Aorta (tissue), 5 donors: ENCODE measurements at regions of chr9 and their contacts with region 1.

Region 1: DNA sequence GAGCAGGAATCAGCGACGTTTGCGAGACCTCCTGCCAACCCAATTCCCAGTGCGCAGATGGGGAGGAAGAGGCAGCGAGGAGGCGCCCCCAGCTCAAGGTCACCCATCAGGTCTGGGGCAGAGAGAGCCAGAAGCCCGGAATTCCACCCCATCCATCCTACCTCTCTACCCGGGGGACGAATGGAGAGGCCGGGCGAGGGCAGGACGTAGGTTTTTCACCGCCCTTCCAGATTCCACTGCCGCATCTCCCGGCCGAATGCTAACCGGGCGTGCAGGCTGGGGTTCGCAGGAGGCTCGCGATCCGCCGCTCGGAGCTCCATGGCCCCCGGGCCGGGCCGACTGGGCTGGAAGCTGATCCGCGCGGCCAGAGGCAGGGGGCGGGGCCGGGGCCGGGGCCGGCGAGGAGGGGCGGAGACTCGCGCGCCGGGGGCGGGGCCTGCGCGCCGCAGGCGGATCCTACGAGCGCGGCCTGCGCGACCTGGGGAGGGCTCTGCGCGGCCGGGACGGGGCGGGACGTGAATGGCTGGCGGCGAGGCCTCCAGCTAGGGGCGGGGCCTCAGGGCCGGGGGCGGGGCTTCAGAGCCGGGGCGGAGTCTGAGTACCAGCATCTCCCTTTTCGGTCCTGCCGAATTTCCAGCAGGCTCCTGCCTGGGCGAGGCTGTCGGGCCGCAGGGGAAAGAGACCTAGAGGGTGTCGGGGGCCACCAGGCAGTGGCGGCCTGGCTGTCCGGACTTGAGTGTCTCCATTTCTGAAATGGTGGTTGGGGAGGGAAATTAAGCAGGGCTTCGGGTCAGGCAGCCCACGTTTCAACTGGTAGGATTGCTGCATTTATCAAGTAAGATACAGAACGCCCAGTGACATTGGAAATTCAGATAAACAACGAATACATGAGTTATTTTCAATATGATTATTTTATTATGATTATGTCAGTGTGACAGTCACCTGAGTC is at the start of gene ST6GALNAC4:
- DNase-seq: peak; percentile 96 to 98
- ATAC-seq: peak; percentile 93
- H3K4me3 ChIP-seq: peak within 1 kb of the TSS; percentile 44 to 72
- H3K27ac ChIP-seq: peak within 1 kb of the TSS in 1 of 2 donors; percentile 26
- H3K4me1 ChIP-seq: no peaks in the 10 kb centered on the region
- H3K27me3 ChIP-seq: no peaks in the 10 kb centered on the region
- total RNA-seq, gene ST6GALNAC4: 34.9 to 46.5 TPM

Region 2: DNA sequence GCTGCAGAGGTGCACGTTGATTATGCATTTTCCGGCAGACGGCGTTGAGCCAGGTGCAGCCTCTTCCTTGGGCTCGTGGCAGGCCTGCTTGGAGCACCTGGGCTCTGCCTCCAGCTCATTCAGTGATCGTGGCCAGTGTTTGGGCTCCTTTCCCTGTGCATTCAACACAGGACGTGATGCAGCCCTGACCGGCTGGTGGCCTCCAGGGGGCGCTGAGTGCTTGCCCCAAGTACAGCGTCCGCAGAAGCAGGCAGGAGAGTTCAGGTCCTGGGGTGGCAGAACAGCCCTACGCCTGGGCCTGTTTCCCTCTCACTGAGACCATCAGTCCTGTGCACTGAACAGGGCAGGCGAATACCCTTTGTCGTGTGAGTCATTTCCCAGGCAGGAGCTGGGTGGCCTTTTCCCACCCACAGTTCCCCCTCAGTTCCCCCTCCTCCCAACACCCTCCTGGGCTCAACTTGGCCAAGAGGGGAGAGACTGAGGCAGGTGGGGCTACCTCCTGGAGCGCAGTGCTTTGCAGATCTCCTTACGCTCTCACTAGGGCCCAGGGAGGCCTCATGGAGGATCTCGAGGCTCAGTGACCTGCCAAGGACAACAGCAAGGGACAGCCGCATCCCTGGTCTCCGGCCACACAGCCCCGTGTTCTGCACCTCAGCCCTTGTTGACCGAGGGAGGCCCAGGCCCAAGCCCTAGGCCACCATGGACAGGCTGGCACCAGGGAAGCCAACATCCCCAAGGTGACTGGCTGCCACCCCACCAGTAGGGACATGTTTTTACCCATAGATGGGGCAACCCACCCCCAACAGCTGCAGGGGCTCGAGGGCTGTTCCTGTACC is 412.8 kb before region 1 on chr9:
- intact Hi-C with region 1: loop called (anchors 5 to 10 kb)
- DNase-seq: peak; percentile 91 to 94
- ATAC-seq: peak; percentile 82
- H3K4me3 ChIP-seq: no peak overlapping the region
- H3K27ac ChIP-seq: peak overlapping the region in 1 of 2 donors; percentile 4
- H3K4me1 ChIP-seq: no peaks in the 10 kb centered on the region
- H3K27me3 ChIP-seq: no peaks in the 10 kb centered on the region

Region 3: GRCh38 chr9:127586537-127586936 is 330.4 kb before region 1 on chr9:
- intact Hi-C with region 1: loop called (anchors 2 kb)
- DNase-seq: peak; percentile 84 to 88
- ATAC-seq: peak; percentile 87
- H3K4me3 ChIP-seq: no peak overlapping the region
- H3K27ac ChIP-seq: no peak overlapping the region
- H3K4me1 ChIP-seq: no peaks in the 10 kb centered on the region
- H3K27me3 ChIP-seq: no peaks in the 10 kb centered on the region

Region 4: DNA sequence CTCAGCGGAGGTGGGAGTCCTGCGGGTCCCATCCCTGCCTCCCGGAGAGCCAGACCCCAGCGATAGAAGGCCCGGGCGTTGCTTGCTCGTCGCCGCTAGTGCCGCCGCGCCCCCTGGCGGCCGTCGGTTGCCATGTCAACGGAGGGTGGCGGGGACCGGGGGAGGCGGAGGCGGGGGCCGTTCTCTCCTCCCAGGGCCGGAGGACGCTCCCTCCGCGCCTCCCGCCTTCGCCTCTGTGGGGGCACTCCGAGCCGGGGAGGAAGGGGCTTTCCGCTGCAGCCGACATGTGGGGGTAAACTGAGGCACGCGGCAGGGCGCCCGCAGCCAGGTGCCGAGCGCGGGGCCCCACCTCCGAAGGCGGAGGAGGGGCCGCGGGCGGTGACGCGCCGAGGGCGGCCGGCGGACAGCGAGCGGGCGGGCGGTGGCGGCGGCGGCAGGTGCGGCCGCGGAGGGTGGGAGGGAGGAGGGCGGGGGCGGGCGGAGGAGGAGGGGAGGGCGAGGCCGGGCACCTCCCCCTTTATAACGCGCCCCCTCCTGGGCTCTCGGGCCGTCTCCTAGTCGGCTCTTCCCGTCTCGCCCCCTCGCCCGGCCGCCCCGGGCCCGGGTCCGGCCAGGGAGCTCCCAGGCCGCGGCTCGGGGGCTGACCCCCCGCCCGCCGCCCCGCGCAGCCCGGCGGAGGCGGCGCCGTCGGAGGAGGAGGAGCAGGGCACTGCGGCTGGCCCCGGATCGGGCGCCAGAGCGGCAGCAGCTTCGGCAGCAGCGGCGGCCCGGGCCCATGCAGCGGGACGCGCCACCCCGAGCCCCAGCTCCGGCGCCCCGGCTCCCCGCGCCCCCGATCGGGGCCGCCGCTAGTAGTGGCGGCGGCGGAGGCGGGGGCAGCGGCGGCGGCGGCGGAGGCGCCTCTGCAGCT is 131.7 kb before region 1 on chr9:
- intact Hi-C with region 1: loop called (anchors 2 to 5 kb)
- DNase-seq: peak; percentile 92 to 97
- ATAC-seq: peak; percentile 89
- H3K4me3 ChIP-seq: peak overlapping the region; percentile 92 to 97
- H3K27ac ChIP-seq: peak overlapping the region; percentile 60 to 78
- H3K4me1 ChIP-seq: no peaks in the 10 kb centered on the region
- H3K27me3 ChIP-seq: no peaks in the 10 kb centered on the region

Region 5: DNA sequence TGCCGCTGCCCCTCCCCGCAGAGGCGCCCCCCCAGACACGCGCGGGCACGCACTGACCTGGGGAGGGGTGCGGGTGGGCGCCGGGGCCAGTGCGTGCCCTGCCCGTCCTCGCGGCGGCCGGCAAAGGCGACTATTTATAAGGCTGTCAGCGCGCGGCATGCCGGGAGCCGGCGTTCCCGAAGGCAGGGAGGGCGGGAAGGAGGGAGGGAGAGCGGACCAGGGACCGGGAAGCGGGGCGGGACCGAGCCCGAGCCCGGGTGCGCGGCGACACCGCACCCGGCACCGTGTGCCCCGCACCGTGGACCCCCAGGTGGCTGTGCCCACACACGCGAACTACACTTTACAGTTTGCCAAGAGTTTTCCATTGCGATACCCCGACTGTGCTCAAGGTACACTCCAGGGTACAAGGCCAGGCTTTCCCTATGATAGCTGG is 39.4 kb before region 1 on chr9 and contains the start of gene AK1:
- intact Hi-C with region 1: loop called in 1 of 2 experiments (anchors 5 kb)
- DNase-seq: peak; percentile 88 to 95
- ATAC-seq: peak; percentile 82
- H3K4me3 ChIP-seq: peak within 1 kb of the TSS; percentile 56 to 57
- H3K27ac ChIP-seq: peak within 1 kb of the TSS in 1 of 2 donors; percentile 31
- H3K4me1 ChIP-seq: peaks cover 0 to 2% of the 10 kb centered on the region in 2 donors
- H3K27me3 ChIP-seq: no peaks in the 10 kb centered on the region
- total RNA-seq, gene AK1: 92.4 to 99.5 TPM

Region 6: GRCh38 chr9:127899128-127899946 is 17.6 kb before region 1 on chr9 and contains the start of gene ST6GALNAC6:
- intact Hi-C with region 1: loop called in 1 of 2 experiments (anchors 2 kb)
- DNase-seq: peak; percentile 82 to 93
- ATAC-seq: peak; percentile 80
- H3K4me3 ChIP-seq: peak within 1 kb of the TSS; percentile 77 to 97
- H3K27ac ChIP-seq: peak within 1 kb of the TSS; percentile 92 to 96
- H3K4me1 ChIP-seq: no peaks in the 10 kb centered on the region
- H3K27me3 ChIP-seq: no peaks in the 10 kb centered on the region
- total RNA-seq, gene ST6GALNAC6: 103 to 125 TPM